B cell (primary cell): ENCODE measurements at regions of chr10 and their contacts with region 1.

Region 1: DNA sequence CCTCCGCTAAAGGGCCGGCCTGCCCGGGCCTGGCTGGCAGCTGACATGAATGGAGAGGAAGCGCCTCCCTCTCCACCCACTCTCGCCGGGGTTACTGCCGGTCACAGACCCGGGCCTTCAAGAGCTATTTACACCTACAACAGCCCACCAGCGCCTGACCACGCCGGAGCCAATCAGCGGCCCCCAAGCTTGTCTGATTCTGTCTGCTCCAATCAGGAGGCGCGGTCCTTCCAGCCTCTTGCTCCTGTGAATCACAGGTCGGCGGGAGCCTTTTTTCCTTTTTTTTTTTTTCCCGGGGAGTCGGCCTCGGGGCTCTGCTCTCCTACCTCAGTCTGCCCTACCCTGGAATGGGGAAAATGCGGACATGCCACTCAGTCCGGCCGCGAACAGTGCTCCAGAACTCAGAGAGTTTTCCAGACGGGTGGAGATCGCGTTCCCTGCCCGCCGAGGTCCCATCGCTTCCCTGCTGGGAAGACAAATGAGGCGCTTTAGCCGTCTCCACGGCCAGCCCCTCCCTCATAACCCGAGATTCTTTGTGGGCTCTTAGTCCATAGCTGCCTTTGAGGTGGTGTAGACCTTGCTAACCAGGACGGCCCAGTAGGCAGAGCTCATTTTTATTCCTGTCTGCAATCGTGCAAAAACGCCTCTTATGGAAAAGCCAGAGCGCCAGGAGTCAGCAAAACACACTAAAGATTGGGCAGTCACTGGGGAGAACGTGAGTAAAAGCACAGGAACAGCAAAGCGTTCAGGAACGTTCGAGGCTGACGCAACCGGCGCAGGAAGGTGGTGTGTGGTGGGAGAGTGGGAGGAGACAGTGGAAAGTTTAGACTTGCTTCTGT is 26.5 kb downstream of the SCD start:
- DNase-seq: peak; percentile 87
- ATAC-seq: peak; percentile 97
- H3K4me3 ChIP-seq: peak overlapping the region; percentile 57 to 82 (median 81)
- H3K4me3 Mint-ChIP-seq: no peak overlapping the region
- H3K27ac ChIP-seq: peak overlapping the region; percentile 83 to 91
- H3K27ac Mint-ChIP-seq: no peak overlapping the region
- H3K4me1 ChIP-seq: peaks cover 32 to 52% of the 10 kb centered on the region in 2 donors
- H3K4me1 Mint-ChIP-seq: peaks cover 26% of the 10 kb centered on the region
- H3K27me3 ChIP-seq: peaks cover 0 to 2% (median 0%) of the 10 kb centered on the region in 4 experiments
- H3K27me3 Mint-ChIP-seq: no peaks in the 10 kb centered on the region
- CTCF ChIP-seq: no peak

Region 2: GRCh38 chr10:100338434-100339036 is 35.0 kb before region 1 on chr10:
- CTCF ChIA-PET with region 1: interaction called, 13 read pairs
- POLR2A ChIA-PET with region 1: no interaction called
- intact Hi-C with region 1: loop called (anchors 5 kb)
- DNase-seq: peak; percentile 83
- ATAC-seq: peak; percentile 78
- H3K4me3 ChIP-seq: peak overlapping the region in 1 of 5 experiments; percentile 19
- H3K4me3 Mint-ChIP-seq: peak overlapping the region; percentile 72
- H3K27ac ChIP-seq: peak overlapping the region; percentile 38 to 49
- H3K27ac Mint-ChIP-seq: peak overlapping the region; percentile 67
- H3K4me1 ChIP-seq: peaks cover 20 to 24% of the 10 kb centered on the region in 2 donors
- H3K4me1 Mint-ChIP-seq: peaks cover 26% of the 10 kb centered on the region
- H3K27me3 ChIP-seq: peaks cover 0 to 6% (median 0%) of the 10 kb centered on the region in 4 experiments
- H3K27me3 Mint-ChIP-seq: peaks cover 11% of the 10 kb centered on the region
- CTCF ChIP-seq: peak; percentile 96

Region 3: GRCh38 chr10:100346765-100347567 is 26.6 kb before region 1 on chr10 and contains the start of gene SCD:
- CTCF ChIA-PET with region 1: interaction called, 3 read pairs
- POLR2A ChIA-PET with region 1: interaction called, 20 read pairs
- intact Hi-C with region 1: loop called (anchors 1 kb)
- DNase-seq: peak; percentile 92
- ATAC-seq: peak; percentile 95
- H3K4me3 ChIP-seq: peak within 1 kb of the TSS; percentile 62 to 74 (median 72)
- H3K4me3 Mint-ChIP-seq: peak within 1 kb of the TSS; percentile 91
- H3K27ac ChIP-seq: peak within 1 kb of the TSS; percentile 64 to 85
- H3K27ac Mint-ChIP-seq: peak within 1 kb of the TSS; percentile 78
- H3K4me1 ChIP-seq: peaks cover 14 to 23% of the 10 kb centered on the region in 2 donors
- H3K4me1 Mint-ChIP-seq: peaks cover 22% of the 10 kb centered on the region
- H3K27me3 ChIP-seq: peaks cover 0 to 8% (median 0%) of the 10 kb centered on the region in 4 experiments
- H3K27me3 Mint-ChIP-seq: no peaks in the 10 kb centered on the region
- CTCF ChIP-seq: no peak
- total RNA-seq, gene SCD: 5.1 and 5.6 TPM in 2 replicates

Region 4: DNA sequence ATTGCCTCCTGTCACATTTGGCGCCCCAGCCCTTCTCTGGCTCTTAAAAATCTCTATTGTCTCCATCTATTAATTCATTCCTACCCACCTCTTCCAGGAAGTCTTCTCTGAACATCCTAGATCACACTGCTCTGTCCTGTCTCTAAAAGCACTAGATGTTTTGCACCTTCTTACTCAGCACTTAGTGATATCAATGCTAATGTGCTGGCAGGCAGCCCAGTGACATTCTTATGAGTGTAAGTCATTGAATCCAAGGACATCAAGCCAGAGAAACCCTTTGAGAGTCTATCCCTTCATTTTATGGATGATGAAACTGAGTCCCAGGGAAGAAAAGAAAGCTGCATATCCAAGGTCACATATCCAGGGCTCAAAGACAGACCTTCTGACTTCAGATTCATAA is 323.6 kb after region 1 on chr10:
- CTCF ChIA-PET with region 1: no interaction called
- POLR2A ChIA-PET with region 1: no interaction called
- intact Hi-C with region 1: no loop called
- DNase-seq: no peak
- ATAC-seq: no peak
- H3K4me3 ChIP-seq: no peak overlapping the region
- H3K4me3 Mint-ChIP-seq: no peak overlapping the region
- H3K27ac ChIP-seq: no peak overlapping the region
- H3K27ac Mint-ChIP-seq: no peak overlapping the region
- H3K4me1 ChIP-seq: peaks cover 12 to 18% of the 10 kb centered on the region in 2 donors
- H3K4me1 Mint-ChIP-seq: peaks cover 14% of the 10 kb centered on the region
- H3K27me3 ChIP-seq: peaks cover 0 to 4% (median 1%) of the 10 kb centered on the region in 4 experiments
- H3K27me3 Mint-ChIP-seq: peaks cover 19% of the 10 kb centered on the region
- CTCF ChIP-seq: no peak